AG04450 (cell line): ENCODE measurements at regions of chr2 and their contacts with region 1.

Region 1: DNA sequence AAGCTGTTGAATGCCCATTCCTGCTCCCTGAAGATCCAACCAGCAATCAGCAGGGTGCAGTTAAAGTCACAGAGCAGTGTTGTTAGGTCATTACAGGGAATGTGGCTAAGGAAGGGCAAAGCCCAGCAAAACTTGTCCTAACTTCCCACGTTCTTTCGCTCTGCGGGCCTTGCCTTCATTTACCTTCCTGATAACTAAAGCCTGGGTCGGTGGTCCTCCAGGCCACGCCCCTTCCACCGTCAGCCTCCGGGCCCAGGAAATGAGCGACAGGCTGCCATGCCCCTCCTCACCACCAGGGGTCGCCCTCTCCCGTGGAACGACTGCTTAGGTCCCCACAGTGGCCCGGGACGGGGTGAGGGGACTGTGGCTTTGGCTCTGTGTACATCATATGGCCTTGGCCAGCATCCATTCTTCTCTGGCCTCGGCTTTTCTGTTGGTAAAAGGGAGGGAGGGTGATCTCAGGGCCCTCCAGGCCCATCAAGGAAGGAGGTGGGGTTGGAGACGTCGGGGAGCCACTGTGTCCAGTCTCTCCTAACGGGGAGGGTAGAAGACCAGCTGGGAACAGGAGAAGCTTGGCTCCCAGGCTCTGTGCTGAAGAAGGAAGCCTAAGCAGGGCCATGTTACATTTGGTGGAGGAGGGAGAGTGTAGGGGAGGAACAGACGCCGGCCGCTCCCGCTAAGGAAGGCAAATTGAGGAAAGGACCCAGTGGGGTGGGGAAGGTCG is 2.2 kb downstream of the SH2D6 start:
- DNase-seq: no peak
- H3K4me3 ChIP-seq: no peak overlapping the region; the same call in 1 of the 2 replicates
- H3K27ac ChIP-seq: peak overlapping the region; percentile 83
- H3K27me3 ChIP-seq: no peaks in the 10 kb centered on the region
- CTCF ChIP-seq: peak; percentile 97

Region 2: GRCh38 chr2:85545780-85546240 is 125.1 kb after region 1 on chr2:
- CTCF ChIA-PET with region 1: interaction called, 124 read pairs
- POLR2A ChIA-PET with region 1: interaction called, 115 read pairs
- DNase-seq: no peak
- H3K4me3 ChIP-seq: no peak overlapping the region
- H3K27ac ChIP-seq: no peak overlapping the region
- H3K27me3 ChIP-seq: no peaks in the 10 kb centered on the region
- CTCF ChIP-seq: no peak

Region 3: GRCh38 chr2:85628658-85629057 is 208.0 kb after region 1 on chr2:
- CTCF ChIA-PET with region 1: no interaction called
- POLR2A ChIA-PET with region 1: interaction called, 11 read pairs
- DNase-seq: no peak
- H3K4me3 ChIP-seq: no peak overlapping the region
- H3K27ac ChIP-seq: no peak overlapping the region
- H3K27me3 ChIP-seq: no peaks in the 10 kb centered on the region
- CTCF ChIP-seq: no peak